ENCODE measurements at regions of chr2 and their contacts with region 1.

Region 1: DNA sequence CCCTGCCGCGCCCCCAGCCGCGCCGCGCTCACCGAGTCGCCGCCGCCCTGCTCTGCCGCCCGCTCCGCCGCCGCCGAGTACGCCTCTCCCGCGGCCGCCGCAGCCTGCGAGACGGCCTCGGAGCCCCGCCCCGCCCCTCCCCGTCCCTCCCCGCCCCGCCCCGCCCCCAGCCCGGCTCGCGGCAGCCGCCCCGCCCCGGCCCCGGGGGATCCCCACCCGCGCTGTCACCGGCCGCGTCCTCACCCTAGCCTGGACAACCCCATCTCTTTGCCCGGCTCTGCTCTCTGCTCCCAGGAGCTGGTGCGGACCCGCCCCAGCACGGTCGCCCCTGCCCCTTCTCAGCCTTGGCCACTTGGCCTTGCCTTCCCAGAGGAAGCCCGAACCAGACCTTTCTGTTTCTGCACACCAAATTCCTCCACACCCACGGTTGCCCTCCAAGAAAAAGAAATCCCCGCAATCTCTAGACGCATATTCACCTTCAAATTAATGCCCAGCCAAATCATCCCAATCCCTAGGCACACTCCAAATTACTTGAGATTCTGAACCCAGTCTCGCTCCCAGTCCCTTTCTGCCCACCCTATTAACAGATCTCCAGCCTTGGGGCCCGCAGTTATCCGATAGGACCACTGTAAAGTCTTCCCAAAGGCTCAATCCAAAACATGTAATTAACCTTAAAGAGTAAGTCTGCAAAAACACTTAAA is at the start of gene CYRIA:
- DNase-seq: peak; percentile 36
- H3K4me3 ChIP-seq: peak within 1 kb of the TSS; percentile 43 to 63 (median 58)
- H3K27ac ChIP-seq: no peak within 1 kb of the TSS
- H3K4me1 ChIP-seq: peaks cover 6% of the 10 kb centered on the region
- H3K27me3 ChIP-seq: peaks cover 7% of the 10 kb centered on the region
- CTCF ChIP-seq: no peak
- total RNA-seq, gene CYRIA: 1.1 to 2.0 TPM

Region 2: GRCh38 chr2:16635791-16636699 is 29.9 kb before region 1 on chr2:
- CTCF ChIA-PET with region 1: no interaction called
- dilution Hi-C with region 1: no loop called
- in situ Hi-C with region 1: no loop called
- intact Hi-C with region 1: no loop called
- DNase-seq: no peak
- H3K4me3 ChIP-seq: no peak overlapping the region
- H3K27ac ChIP-seq: no peak overlapping the region
- H3K4me1 ChIP-seq: peaks cover 6% of the 10 kb centered on the region
- H3K27me3 ChIP-seq: no peaks in the 10 kb centered on the region
- CTCF ChIP-seq: no peak

Region 3: GRCh38 chr2:16713011-16713423 is 47.1 kb after region 1 on chr2:
- CTCF ChIA-PET with region 1: no interaction called
- dilution Hi-C with region 1: loop called (anchors 5 kb)
- in situ Hi-C with region 1: no loop called
- intact Hi-C with region 1: no loop called
- DNase-seq: no peak
- H3K4me3 ChIP-seq: no peak overlapping the region
- H3K27ac ChIP-seq: no peak overlapping the region
- H3K4me1 ChIP-seq: no peaks in the 10 kb centered on the region
- H3K27me3 ChIP-seq: no peaks in the 10 kb centered on the region
- CTCF ChIP-seq: no peak

Region 4: GRCh38 chr2:16739778-16740581 is 74.1 kb after region 1 on chr2:
- CTCF ChIA-PET with region 1: no interaction called
- dilution Hi-C with region 1: loop called (anchors 5 kb)
- in situ Hi-C with region 1: no loop called
- intact Hi-C with region 1: no loop called
- DNase-seq: peak; percentile 35
- H3K4me3 ChIP-seq: no peak overlapping the region
- H3K27ac ChIP-seq: no peak overlapping the region
- H3K4me1 ChIP-seq: peaks cover 10% of the 10 kb centered on the region
- H3K27me3 ChIP-seq: no peaks in the 10 kb centered on the region
- CTCF ChIP-seq: no peak

Region 5: DNA sequence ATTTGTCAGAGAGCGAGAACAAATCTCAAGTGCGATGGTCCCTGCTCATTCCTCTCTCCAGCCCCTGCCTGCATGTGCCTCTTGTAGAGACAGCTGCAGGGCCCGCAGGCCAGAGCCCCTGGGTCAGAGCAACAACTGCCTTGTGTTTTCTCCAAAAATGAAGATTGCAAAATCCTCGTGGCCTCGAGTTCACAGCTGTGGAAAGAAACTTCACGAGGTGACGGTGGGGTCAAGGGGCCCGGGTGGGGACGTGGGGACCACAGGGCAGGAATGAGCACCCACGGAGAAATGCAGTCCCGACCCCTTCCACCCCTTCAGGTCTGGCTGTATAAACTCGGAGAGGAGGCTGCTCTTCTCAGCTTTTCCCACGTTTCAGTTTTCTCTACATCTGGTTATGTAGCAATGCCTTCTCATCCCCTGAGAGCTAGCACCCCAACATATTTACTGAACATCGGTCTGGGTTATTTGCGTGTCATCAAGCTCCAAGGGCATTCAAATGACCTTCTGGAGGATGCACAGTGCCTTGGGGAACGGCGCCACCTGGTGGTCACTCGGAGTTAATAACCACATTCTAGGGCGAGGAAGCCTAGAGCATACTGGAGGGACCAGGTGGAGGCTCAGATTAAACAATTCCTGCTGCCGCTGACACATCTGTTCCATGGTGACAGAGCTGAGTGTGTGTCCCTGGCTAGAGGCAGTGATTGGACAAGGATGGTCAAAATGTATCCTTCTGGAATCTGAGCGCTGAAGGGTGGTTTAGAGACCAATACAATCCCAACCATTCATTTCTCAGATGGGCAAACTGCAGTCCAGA is 91.1 kb after region 1 on chr2:
- CTCF ChIA-PET with region 1: no interaction called
- dilution Hi-C with region 1: no loop called
- in situ Hi-C with region 1: no loop called
- intact Hi-C with region 1: no loop called
- DNase-seq: peak; percentile 34
- H3K4me3 ChIP-seq: no peak overlapping the region
- H3K27ac ChIP-seq: no peak overlapping the region
- H3K4me1 ChIP-seq: no peaks in the 10 kb centered on the region
- H3K27me3 ChIP-seq: no peaks in the 10 kb centered on the region
- CTCF ChIP-seq: peak; percentile 73 to 85

Region 6: GRCh38 chr2:16933355-16933754 is 267.5 kb after region 1 on chr2:
- CTCF ChIA-PET with region 1: no interaction called
- dilution Hi-C with region 1: no loop called
- in situ Hi-C with region 1: no loop called
- intact Hi-C with region 1: no loop called
- DNase-seq: no peak
- H3K4me3 ChIP-seq: no peak overlapping the region
- H3K27ac ChIP-seq: no peak overlapping the region
- H3K4me1 ChIP-seq: no peaks in the 10 kb centered on the region
- H3K27me3 ChIP-seq: peaks cover 2% of the 10 kb centered on the region
- CTCF ChIP-seq: no peak